ENCODE measurements at regions of chr12 and their contacts with region 1.

Region 1: GRCh38 chr12:59980476-59980875 is 384.6 kb downstream of the SLC16A7 start:
- DNase-seq: no peak
- H3K4me3 ChIP-seq: no peak overlapping the region
- H3K27ac ChIP-seq: no peak overlapping the region
- H3K4me1 ChIP-seq: no peaks in the 10 kb centered on the region
- H3K27me3 ChIP-seq: no peaks in the 10 kb centered on the region
- CTCF ChIP-seq: no peak
- POLR2A ChIP-seq: no peak

Region 2: GRCh38 chr12:60014436-60014835 is 34.0 kb after region 1 on chr12:
- intact Hi-C with region 1: no loop called
- DNase-seq: no peak
- H3K4me3 ChIP-seq: no peak overlapping the region
- H3K27ac ChIP-seq: no peak overlapping the region
- H3K4me1 ChIP-seq: no peaks in the 10 kb centered on the region
- H3K27me3 ChIP-seq: no peaks in the 10 kb centered on the region
- CTCF ChIP-seq: no peak
- POLR2A ChIP-seq: no peak

Region 3: DNA sequence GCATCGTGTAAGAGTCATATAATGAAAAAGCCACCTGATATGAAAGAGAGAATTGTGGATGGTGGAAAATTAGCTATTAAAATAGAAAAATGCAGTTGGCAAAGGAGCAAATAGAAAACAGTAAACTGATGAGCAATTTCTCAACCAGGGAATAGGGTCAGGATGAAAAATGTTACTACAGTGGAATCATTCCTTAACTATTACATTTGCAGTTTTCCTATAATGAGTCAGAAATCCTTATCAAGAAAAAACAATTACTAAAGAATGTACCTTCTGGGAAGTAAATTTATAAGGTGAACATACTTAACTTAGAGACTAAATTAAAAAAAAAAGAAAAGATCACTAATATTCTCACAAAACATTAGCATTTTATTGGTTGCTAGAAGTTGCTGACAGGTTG is 191.8 kb after region 1 on chr12:
- intact Hi-C with region 1: no loop called
- DNase-seq: no peak
- H3K4me3 ChIP-seq: no peak overlapping the region
- H3K27ac ChIP-seq: no peak overlapping the region
- H3K4me1 ChIP-seq: no peaks in the 10 kb centered on the region
- H3K27me3 ChIP-seq: no peaks in the 10 kb centered on the region
- CTCF ChIP-seq: no peak
- POLR2A ChIP-seq: no peak

Region 4: GRCh38 chr12:60710246-60710645 is 729.8 kb after region 1 on chr12:
- intact Hi-C with region 1: loop called (anchors 5 kb)
- DNase-seq: no peak
- H3K4me3 ChIP-seq: no peak overlapping the region
- H3K27ac ChIP-seq: no peak overlapping the region
- H3K4me1 ChIP-seq: no peaks in the 10 kb centered on the region
- H3K27me3 ChIP-seq: no peaks in the 10 kb centered on the region
- CTCF ChIP-seq: no peak
- POLR2A ChIP-seq: no peak